ENCODE measurements at regions of chr1 and their contacts with region 1.

Region 1: GRCh38 chr1:19872190-19872589 is 10.0 kb upstream of the OTUD3 start:
- DNase-seq: peak; percentile 17 to 46
- H3K4me3 ChIP-seq: no peak overlapping the region
- H3K27ac ChIP-seq: no peak overlapping the region
- H3K4me1 ChIP-seq: peaks cover 3% of the 10 kb centered on the region
- H3K27me3 ChIP-seq: no peaks in the 10 kb centered on the region
- CTCF ChIP-seq: no peak

Region 2: DNA sequence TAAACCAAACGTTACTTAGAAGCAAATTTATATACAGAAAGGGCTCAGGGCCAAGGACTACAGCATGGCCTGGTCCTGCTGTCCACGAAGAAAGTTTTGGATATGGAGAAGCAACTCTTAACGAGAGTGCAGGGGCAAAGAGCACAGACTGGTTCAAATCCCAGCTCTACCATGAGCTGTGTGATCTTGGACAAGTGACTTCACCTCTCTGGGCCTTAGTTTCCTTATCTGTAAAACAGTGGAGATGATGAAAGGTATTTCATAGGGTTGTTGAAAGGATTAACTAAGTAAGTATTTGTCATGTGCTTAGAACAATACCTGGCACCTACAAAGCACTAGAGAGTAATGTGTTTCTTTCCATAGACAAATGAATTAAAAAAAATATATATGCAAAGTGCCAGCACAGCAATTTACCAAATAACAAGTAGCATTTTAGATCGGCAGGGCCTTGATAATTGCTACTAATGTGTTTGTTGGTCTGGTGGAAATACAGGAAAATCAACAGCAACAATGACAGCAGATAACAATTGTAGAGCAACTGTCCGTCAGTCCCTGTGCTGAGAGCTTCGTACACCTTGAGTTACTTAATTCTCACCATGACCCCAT is 97.9 kb before region 1 on chr1:
- CTCF ChIA-PET with region 1: interaction called, 17 read pairs
- POLR2A ChIA-PET with region 1: no interaction called
- intact Hi-C with region 1: no loop called
- DNase-seq: no peak
- H3K4me3 ChIP-seq: no peak overlapping the region
- H3K27ac ChIP-seq: no peak overlapping the region
- H3K4me1 ChIP-seq: no peaks in the 10 kb centered on the region; the same call in 1 of the 2 replicates
- H3K27me3 ChIP-seq: no peaks in the 10 kb centered on the region
- CTCF ChIP-seq: no peak

Region 3: GRCh38 chr1:19786988-19787423 is 85.2 kb before region 1 on chr1:
- CTCF ChIA-PET with region 1: no interaction called
- POLR2A ChIA-PET with region 1: interaction called, 19 read pairs
- intact Hi-C with region 1: no loop called
- DNase-seq: peak; percentile 48 to 54
- H3K4me3 ChIP-seq: no peak overlapping the region
- H3K27ac ChIP-seq: no peak overlapping the region
- H3K4me1 ChIP-seq: peaks cover 9% of the 10 kb centered on the region
- H3K27me3 ChIP-seq: no peaks in the 10 kb centered on the region
- CTCF ChIP-seq: no peak

Region 4: DNA sequence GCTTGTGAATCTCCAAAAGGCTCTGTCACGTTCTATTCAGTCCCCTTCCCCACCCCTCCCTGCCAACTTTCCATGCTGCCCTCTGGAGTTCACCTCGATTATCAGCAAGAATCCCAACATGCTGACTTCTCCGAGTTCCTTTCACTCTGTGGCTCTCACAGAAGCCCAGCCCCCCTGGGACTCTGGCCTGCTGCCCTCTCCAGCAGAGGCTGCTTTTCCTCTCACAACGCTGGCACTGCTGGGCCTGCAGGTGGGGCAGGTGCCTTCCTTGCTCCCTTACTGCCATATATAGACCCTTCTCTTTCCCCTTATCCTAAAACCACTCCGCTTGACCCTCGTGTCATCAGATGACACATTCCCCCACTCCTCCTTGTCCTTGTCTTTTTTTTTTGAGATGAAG is 46.9 kb before region 1 on chr1:
- CTCF ChIA-PET with region 1: no interaction called
- POLR2A ChIA-PET with region 1: no interaction called
- intact Hi-C with region 1: no loop called
- DNase-seq: no peak
- H3K4me3 ChIP-seq: no peak overlapping the region
- H3K27ac ChIP-seq: no peak overlapping the region
- H3K4me1 ChIP-seq: no peaks in the 10 kb centered on the region
- H3K27me3 ChIP-seq: no peaks in the 10 kb centered on the region
- CTCF ChIP-seq: no peak

Region 5: DNA sequence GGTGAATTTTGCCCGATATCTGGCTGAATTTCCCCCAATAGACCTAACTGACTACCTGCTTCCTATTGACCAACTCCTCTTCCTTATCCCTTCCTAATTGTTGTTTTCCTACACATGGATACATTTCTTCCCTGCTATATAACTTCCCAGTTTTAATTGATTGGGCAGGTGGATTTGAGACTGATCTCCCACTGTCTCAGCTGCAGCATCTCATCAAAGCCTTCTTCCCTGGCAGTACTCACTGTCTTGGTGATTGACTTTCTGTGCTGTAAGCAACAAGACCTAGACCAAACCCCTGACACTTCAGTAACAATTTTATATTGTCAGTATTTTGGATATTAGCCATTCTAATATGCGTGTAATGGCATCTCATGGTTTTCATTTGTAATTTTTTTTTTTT is 118.5 kb after region 1 on chr1:
- CTCF ChIA-PET with region 1: no interaction called
- POLR2A ChIA-PET with region 1: no interaction called
- intact Hi-C with region 1: no loop called
- DNase-seq: no peak
- H3K4me3 ChIP-seq: no peak overlapping the region
- H3K27ac ChIP-seq: no peak overlapping the region
- H3K4me1 ChIP-seq: no peaks in the 10 kb centered on the region
- H3K27me3 ChIP-seq: no peaks in the 10 kb centered on the region
- CTCF ChIP-seq: no peak

Measured in PC-9 (cell line).